BJ (cell line): ENCODE measurements at regions of chr2 and their contacts with region 1.

Region 1: GRCh38 chr2:222280795-222281194 is 18.0 kb downstream of the PAX3 start:
- DNase-seq: no peak
- H3K4me3 ChIP-seq: no peak overlapping the region
- H3K27me3 ChIP-seq: no peaks in the 10 kb centered on the region
- CTCF ChIP-seq: no peak

Region 2: DNA sequence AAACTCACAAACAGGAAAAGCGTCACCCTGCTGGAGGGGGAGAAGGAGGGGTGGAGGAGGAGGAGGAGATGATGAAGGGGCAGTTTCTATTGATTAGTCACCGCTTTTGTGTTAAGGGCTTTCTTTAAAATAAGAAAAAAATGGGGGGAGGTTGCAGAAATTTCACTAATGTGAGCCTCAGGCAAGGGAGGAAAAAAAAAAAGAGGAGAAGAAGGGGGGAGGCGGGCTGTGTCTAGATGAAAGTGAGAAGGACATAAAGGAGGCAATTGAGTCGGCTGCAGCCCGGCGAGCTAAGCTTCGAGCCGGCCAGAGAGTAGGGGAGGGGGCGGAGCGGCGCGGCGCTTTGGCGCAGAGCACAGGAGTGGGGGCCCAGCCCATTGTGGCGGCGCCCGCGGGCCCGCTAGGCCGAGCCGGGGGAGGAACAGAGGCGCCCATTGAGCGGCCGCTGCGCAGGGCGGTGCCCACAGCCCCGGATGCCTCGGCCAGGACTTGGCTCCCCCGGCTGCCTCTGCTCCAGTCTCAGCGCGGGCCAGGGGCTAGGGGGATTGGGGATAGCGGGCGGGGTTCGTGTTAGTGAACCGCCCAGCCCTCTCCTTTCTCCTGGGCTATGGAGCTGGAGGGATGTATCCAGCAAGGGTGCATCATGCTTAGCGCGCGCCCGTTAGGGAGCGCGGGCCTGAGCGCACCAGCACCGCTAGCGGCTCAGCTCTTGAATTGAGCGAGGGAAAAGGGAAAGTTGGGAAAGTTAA is 10.1 kb after region 1 on chr2:
- CTCF ChIA-PET with region 1: interaction called, 10 read pairs
- POLR2A ChIA-PET with region 1: no interaction called
- DNase-seq: no peak
- H3K4me3 ChIP-seq: peak overlapping the region; percentile 38
- H3K27me3 ChIP-seq: no peaks in the 10 kb centered on the region
- CTCF ChIP-seq: peak; percentile 25; the same call in 1 of the 2 replicates

Region 3: DNA sequence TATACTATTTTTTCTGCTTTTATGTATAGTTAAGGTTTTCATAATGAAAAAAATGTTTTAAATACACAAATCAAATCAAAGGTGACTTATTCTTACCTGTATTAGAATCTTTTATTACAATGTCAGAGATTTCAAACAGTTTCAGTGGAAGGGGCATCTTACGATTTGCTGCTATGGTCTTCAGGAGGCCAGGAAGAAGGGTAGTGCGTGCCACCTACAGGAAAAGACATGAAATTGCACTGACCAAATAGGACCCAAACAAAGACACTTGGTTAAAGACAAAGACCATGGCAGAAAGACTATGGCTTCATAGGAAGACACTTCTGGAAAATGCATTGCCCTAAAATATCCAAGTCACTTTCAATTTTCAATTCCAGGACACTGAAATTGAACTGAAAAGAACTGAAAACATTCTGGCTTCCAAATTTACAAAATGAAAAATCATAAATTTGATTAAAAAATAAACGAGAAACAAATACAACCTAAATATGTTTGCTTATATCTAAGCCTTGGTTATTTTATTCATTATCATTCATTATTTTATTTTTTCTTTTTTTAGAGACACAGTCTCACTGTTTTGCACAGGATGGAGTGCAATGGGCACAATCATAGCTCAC is 333.0 kb after region 1 on chr2:
- CTCF ChIA-PET with region 1: no interaction called
- POLR2A ChIA-PET with region 1: no interaction called
- DNase-seq: no peak
- H3K4me3 ChIP-seq: no peak overlapping the region
- H3K27me3 ChIP-seq: no peaks in the 10 kb centered on the region
- CTCF ChIP-seq: peak; percentile 83